K562 (cell line): ENCODE measurements at regions of chr17 and their contacts with region 1.

Region 1: GRCh38 chr17:27906623-27907022 is 13.5 kb upstream of the LYRM9 start:
- DNase-seq: no peak
- ATAC-seq: no peak
- H3K4me3 ChIP-seq: no peak overlapping the region
- H3K27ac ChIP-seq: no peak overlapping the region
- H3K4me1 ChIP-seq: peaks cover 4 to 26% of the 10 kb centered on the region in 2 experiments
- H3K27me3 ChIP-seq: no peaks in the 10 kb centered on the region
- CTCF ChIP-seq: no peak
- EP300 ChIP-seq: no peak
- POLR2A ChIP-seq: no peak
- RAD21 ChIP-seq: no peak

Region 2: DNA sequence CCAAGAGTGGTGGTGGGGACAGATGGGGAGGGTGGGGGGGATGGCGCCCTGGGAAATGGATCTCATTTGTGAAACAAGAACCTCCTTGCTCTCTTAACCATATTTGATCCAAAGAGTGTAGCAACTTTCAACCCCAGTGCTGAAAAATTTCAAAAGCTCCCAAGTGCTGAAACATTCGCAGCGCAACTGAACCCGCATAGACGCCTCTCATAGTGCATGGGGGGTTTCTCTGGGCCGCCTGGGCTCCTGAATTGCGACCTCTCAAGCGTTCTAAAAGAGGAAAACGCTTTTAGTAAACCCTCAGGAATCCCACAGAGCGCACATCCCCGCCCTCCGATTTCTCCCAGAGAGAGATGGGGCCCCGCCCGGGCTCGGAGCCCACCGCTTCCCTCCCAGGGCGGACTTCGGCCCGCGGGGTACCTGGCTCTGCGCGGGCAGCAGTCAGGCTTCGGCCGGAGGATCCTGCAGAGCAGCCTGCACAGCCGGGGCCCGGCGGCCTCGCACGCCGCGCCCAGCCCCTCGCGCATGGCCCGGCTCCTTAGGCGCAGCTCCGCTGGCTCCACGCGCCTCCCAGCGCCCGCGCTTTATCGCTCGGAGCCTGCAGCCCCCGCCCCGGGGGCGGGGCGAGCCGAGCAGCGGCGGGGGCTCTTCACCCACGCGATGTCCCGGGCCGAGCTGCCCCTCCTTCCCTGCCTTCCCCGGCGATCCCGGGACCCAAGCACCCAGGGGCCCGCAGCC is 113.3 kb before region 1 on chr17:
- CTCF ChIA-PET with region 1: no interaction called
- POLR2A ChIA-PET with region 1: no interaction called
- in situ Hi-C with region 1: no loop called
- intact Hi-C with region 1: no loop called
- DNase-seq: peak; percentile 28 to 68 (median 55)
- ATAC-seq: peak; percentile 76
- H3K4me3 ChIP-seq: no peak overlapping the region
- H3K27ac ChIP-seq: no peak overlapping the region
- H3K4me1 ChIP-seq: peaks cover 0 to 8% of the 10 kb centered on the region in 2 experiments; a peak in 2 of 5 replicates
- H3K27me3 ChIP-seq: peaks cover 18 to 58% of the 10 kb centered on the region in 2 experiments; a peak in 4 of 5 replicates
- CTCF ChIP-seq: no peak
- EP300 ChIP-seq: no peak
- POLR2A ChIP-seq: no peak
- RAD21 ChIP-seq: no peak

Region 3: GRCh38 chr17:27879987-27880608 is 26.5 kb before region 1 on chr17:
- CTCF ChIA-PET with region 1: no interaction called
- POLR2A ChIA-PET with region 1: no interaction called
- in situ Hi-C with region 1: no loop called
- intact Hi-C with region 1: no loop called
- DNase-seq: peak; percentile 78 to 85 (median 80)
- ATAC-seq: peak; percentile 98
- H3K4me3 ChIP-seq: no peak overlapping the region
- H3K27ac ChIP-seq: no peak overlapping the region
- H3K4me1 ChIP-seq: no peaks in the 10 kb centered on the region
- H3K27me3 ChIP-seq: peaks cover 21 to 40% of the 10 kb centered on the region in 2 experiments
- CTCF ChIP-seq: peak; percentile 90 to 95 (median 92)
- EP300 ChIP-seq: no peak
- POLR2A ChIP-seq: no peak
- RAD21 ChIP-seq: peak; percentile 87 to 92

Region 4: DNA sequence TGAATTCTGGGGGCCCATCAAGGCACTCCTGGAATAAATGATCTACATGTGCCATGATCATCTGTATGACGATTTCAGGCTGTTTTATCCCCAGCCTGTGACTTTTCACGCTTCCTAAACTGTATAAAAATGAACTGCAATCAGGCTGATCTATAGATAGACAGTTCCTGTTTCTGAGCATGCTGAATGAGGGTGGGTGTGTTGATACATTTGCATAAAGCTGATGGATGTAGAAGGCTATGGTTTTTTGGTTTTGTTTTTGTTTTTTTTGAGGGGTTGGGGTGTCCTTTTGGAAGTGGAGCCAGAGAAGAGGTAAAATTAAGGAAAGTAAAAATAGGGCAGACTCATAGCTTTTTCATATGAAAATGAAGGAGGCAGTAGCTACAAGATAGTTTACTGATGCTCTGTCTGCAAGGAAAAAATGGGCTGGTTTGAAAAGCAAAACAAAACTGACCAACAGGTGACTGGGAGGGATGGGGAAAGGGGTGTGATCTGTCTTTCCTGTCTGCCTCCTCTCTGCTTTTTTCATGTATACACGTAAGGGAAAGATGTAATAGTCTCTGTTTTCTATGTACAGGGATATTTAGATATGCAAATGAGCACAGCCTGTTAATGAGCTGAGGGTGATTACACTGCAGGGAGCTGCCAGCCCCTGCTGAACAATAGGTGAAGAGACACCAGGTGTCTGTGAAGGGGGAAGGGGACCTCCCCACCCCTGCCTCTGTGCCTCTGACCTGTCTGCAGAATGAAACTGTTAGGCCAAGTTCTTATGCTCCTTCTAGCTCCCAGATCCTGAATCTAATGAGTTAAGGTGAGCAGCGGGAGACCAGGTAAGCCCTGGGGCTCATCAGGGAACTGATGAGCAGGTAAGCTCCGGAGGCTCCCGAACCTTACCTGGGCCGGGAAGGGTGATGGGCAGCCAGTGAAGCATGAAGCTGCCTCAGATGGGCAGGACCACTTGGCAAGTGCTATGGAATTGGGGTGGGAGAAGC is 33.1 kb after region 1 on chr17:
- CTCF ChIA-PET with region 1: no interaction called
- POLR2A ChIA-PET with region 1: no interaction called
- in situ Hi-C with region 1: no loop called
- intact Hi-C with region 1: no loop called
- DNase-seq: no peak
- ATAC-seq: no peak
- H3K4me3 ChIP-seq: no peak overlapping the region
- H3K27ac ChIP-seq: no peak overlapping the region
- H3K4me1 ChIP-seq: peaks cover 0 to 4% of the 10 kb centered on the region in 2 experiments; a peak in 2 of 5 replicates
- H3K27me3 ChIP-seq: no peaks in the 10 kb centered on the region
- CTCF ChIP-seq: no peak
- EP300 ChIP-seq: no peak
- POLR2A ChIP-seq: no peak
- RAD21 ChIP-seq: no peak

Region 5: GRCh38 chr17:27968206-27968732 is 61.6 kb after region 1 on chr17:
- CTCF ChIA-PET with region 1: no interaction called
- POLR2A ChIA-PET with region 1: no interaction called
- in situ Hi-C with region 1: no loop called
- intact Hi-C with region 1: loop called (anchors 5 kb)
- DNase-seq: peak; percentile 74 to 95 (median 83)
- ATAC-seq: peak; percentile 90
- H3K4me3 ChIP-seq: no peak overlapping the region
- H3K27ac ChIP-seq: peak overlapping the region; percentile 79
- H3K4me1 ChIP-seq: peaks cover 30 to 50% of the 10 kb centered on the region in 2 experiments
- H3K27me3 ChIP-seq: no peaks in the 10 kb centered on the region
- CTCF ChIP-seq: no peak
- EP300 ChIP-seq: peak; percentile 97
- POLR2A ChIP-seq: no peak
- RAD21 ChIP-seq: 0 out of 4 replicates have a peak, but pooled peaks of 1 of the 2 experiments have one; percentile 21